ENCODE measurements at regions of chr2 and their contacts with region 1.

Region 1: GRCh38 chr2:7203055-7203467 is 285.8 kb downstream of the RNF144A start:
- DNase-seq: peak; percentile 43 to 69 (median 58)
- H3K4me3 ChIP-seq: no peak overlapping the region
- H3K4me3 Mint-ChIP-seq: no peak overlapping the region
- H3K27ac ChIP-seq: no peak overlapping the region
- H3K27ac Mint-ChIP-seq: no peak overlapping the region
- H3K4me1 ChIP-seq: peaks cover 15 to 16% of the 10 kb centered on the region in 2 donors
- H3K4me1 Mint-ChIP-seq: peaks cover 17% of the 10 kb centered on the region
- H3K27me3 ChIP-seq: no peaks in the 10 kb centered on the region
- H3K27me3 Mint-ChIP-seq: no peaks in the 10 kb centered on the region
- CTCF ChIP-seq: peak; percentile 96

Region 2: GRCh38 chr2:6845312-6845711 is 357.7 kb before region 1 on chr2:
- intact Hi-C with region 1: no loop called
- DNase-seq: no peak
- H3K4me3 ChIP-seq: peak overlapping the region in 1 of 3 experiments; percentile 18
- H3K4me3 Mint-ChIP-seq: no peak overlapping the region
- H3K27ac ChIP-seq: no peak overlapping the region
- H3K27ac Mint-ChIP-seq: no peak overlapping the region
- H3K4me1 ChIP-seq: no peaks in the 10 kb centered on the region
- H3K4me1 Mint-ChIP-seq: no peaks in the 10 kb centered on the region
- H3K27me3 ChIP-seq: no peaks in the 10 kb centered on the region
- H3K27me3 Mint-ChIP-seq: no peaks in the 10 kb centered on the region
- CTCF ChIP-seq: no peak

Region 3: GRCh38 chr2:7097348-7097895 is 105.6 kb before region 1 on chr2:
- intact Hi-C with region 1: loop called in 1 of 2 experiments (anchors 5 kb)
- DNase-seq: peak; percentile 59 to 75 (median 69)
- H3K4me3 ChIP-seq: no peak overlapping the region
- H3K4me3 Mint-ChIP-seq: peak overlapping the region in 1 of 2 donors; percentile 83
- H3K27ac ChIP-seq: no peak overlapping the region
- H3K27ac Mint-ChIP-seq: peak overlapping the region in 3 of 7 donors; percentile 1 to 75 (median 32)
- H3K4me1 ChIP-seq: peaks cover 3 to 4% of the 10 kb centered on the region in 2 donors
- H3K4me1 Mint-ChIP-seq: peaks cover 6% of the 10 kb centered on the region
- H3K27me3 ChIP-seq: no peaks in the 10 kb centered on the region
- H3K27me3 Mint-ChIP-seq: peaks cover 0 to 7% (median 3%) of the 10 kb centered on the region in 3 donors
- CTCF ChIP-seq: peak; percentile 97

Region 4: GRCh38 chr2:8761529-8762164 is 1558.6 kb after region 1 on chr2:
- intact Hi-C with region 1: loop called in 1 of 2 experiments (anchors 10 kb)
- DNase-seq: peak in 2 of 3 donors; percentile 3 to 8
- H3K4me3 ChIP-seq: no peak overlapping the region
- H3K4me3 Mint-ChIP-seq: no peak overlapping the region
- H3K27ac ChIP-seq: no peak overlapping the region
- H3K27ac Mint-ChIP-seq: no peak overlapping the region
- H3K4me1 ChIP-seq: no peaks in the 10 kb centered on the region
- H3K4me1 Mint-ChIP-seq: no peaks in the 10 kb centered on the region
- H3K27me3 ChIP-seq: no peaks in the 10 kb centered on the region
- H3K27me3 Mint-ChIP-seq: peaks cover 0 to 2% (median 0%) of the 10 kb centered on the region in 3 donors
- CTCF ChIP-seq: peak; percentile 62

Measured in CD14-positive monocyte (primary cell).